Calu3 (cell line): ENCODE measurements at regions of chr7 and their contacts with region 1.

Region 1: DNA sequence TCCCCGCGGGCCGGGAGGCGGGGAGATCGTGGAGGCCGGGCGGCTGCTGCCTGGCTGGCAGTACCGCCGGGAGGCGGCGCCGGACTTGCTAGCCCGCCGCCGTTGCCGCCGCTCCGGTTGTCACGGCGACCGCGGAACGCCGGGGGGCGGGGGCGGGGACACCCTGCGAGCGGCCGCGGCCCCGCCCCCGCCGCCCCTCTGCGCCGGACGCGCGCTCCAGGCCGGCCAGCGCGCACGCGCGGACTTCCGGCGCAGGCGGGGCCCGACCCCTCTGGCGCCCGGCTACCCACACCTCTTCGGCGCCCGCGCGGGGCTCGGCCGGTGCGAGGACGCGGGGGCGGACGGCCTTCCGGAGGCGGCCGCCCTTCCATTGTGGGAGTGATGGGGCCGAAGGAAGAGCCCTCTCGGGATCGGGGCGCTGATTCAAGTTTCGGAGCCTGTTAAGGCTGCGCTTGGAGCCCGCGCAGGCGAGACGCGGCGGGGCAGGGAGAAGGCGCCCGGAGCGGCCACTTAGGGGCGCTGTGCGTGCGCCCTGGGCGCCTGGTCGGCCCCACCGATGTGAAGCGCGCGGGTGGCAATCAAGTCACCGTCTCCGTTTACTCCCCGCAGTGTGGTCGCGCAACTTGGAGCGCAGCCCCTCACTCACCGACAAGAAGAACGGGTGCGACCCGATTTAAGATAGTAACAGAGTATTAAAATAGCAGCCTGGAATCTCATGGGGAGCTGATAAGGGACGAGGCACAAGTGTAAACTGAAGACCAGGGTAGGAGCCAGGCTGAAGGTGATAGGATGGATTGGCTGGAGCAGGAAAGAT is 448 bp upstream of the DPY19L1 start:
- DNase-seq: peak; percentile 99
- H3K4me3 Mint-ChIP-seq: peak overlapping the region; percentile 73
- H3K27ac Mint-ChIP-seq: peak overlapping the region; percentile 77
- H3K4me1 Mint-ChIP-seq: peaks cover 38% of the 10 kb centered on the region
- H3K27me3 Mint-ChIP-seq: peaks cover 4% of the 10 kb centered on the region
- CTCF ChIP-seq: peak; percentile 90

Region 2: GRCh38 chr7:34321000-34321581 is 716.6 kb before region 1 on chr7:
- CTCF ChIA-PET with region 1: interaction called, 22 read pairs
- intact Hi-C with region 1: no loop called
- DNase-seq: peak; percentile 83
- H3K4me3 Mint-ChIP-seq: peak overlapping the region; percentile 56
- H3K27ac Mint-ChIP-seq: peak overlapping the region; percentile 40
- H3K4me1 Mint-ChIP-seq: peaks cover 15% of the 10 kb centered on the region
- H3K27me3 Mint-ChIP-seq: no peaks in the 10 kb centered on the region
- CTCF ChIP-seq: peak; percentile 97

Region 3: DNA sequence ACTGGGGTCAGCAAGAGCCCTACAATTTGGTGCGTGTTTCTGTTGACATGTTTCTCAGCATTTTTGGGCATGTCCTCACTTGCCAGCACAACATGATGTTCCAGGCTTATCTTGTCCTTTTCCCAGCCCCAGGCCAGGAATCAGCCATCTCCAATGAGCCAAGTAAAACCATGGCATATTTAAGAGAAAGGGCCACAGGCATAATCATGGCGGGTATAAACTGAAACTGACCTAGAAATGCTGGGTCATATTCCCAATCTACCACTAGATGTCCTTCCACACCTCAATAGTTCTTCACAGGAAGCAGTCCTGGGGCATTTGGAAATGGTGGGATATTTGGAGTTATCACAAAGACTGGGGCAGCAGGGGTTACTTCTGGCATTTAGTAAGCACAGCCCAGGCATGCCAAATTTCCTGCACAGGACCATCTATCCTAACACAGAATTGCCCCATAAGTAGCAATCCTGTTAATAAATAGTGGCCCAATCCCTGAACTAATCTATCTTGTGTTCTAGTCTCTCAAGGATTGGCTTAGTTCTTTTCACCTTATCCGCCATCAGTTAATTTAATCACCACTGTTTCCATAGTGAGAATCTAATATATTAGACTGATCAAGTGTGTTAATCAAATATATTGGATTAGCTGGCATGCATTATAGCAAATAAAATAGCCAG is 278.1 kb before region 1 on chr7:
- CTCF ChIA-PET with region 1: interaction called, 3 read pairs
- intact Hi-C with region 1: loop called (anchors 2 kb)
- DNase-seq: peak; percentile 53
- H3K4me3 Mint-ChIP-seq: no peak overlapping the region
- H3K27ac Mint-ChIP-seq: no peak overlapping the region
- H3K4me1 Mint-ChIP-seq: peaks cover 40% of the 10 kb centered on the region
- H3K27me3 Mint-ChIP-seq: no peaks in the 10 kb centered on the region
- CTCF ChIP-seq: peak; percentile 82

Region 4: DNA sequence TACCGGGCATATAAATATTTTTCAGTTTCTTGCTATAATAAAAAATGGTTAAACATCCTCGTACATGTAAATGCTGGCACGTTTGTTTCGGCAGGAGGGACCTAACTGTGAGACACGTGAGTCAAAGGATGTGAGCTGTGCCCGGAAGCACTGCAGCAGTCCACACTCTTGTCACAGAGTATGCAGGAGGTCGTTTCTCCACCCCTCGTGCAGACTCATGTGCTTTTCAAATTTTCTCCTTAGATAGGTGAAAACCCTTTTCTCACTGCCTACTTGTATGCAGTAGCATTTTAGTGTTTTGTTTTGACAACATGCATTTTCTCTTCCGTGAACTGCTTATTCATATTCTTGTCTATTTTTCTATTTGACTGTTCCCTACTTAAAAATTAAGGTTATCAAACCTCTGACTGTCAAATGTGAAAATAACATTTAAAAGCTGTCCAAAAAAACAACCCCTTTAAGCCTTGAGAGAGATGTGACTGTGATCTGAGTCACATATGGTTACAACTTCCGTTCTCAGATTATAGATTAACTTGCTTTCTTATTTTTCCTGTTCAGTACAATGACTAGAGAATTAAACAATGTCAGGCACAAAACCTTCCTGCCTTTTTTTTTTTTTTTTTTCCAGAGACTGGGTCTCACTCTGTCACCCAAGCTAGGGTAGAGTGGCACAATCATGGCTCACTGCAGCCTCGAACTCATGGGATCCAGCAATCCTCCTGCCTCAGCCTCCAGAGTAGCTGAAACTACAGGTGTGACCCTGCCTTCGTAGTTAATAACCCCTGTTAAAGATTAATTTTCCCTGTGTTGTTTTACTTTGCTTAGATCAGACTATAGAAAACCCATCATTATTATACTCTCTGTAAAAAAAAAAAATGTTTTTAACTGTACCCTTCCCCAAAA is 45.5 kb before region 1 on chr7:
- CTCF ChIA-PET with region 1: interaction called, 10 read pairs
- intact Hi-C with region 1: loop called (anchors 2 kb)
- DNase-seq: peak; percentile 64
- H3K4me3 Mint-ChIP-seq: peak overlapping the region; percentile 59
- H3K27ac Mint-ChIP-seq: peak overlapping the region; percentile 95
- H3K4me1 Mint-ChIP-seq: peaks cover 51% of the 10 kb centered on the region
- H3K27me3 Mint-ChIP-seq: no peaks in the 10 kb centered on the region
- CTCF ChIP-seq: no peak

Region 5: GRCh38 chr7:35519971-35520809 is 482.5 kb after region 1 on chr7:
- CTCF ChIA-PET with region 1: no interaction called
- intact Hi-C with region 1: loop called (anchors 1 kb)
- DNase-seq: peak; percentile 86
- H3K4me3 Mint-ChIP-seq: no peak overlapping the region
- H3K27ac Mint-ChIP-seq: no peak overlapping the region
- H3K4me1 Mint-ChIP-seq: no peaks in the 10 kb centered on the region
- H3K27me3 Mint-ChIP-seq: peaks cover 87% of the 10 kb centered on the region
- CTCF ChIP-seq: peak; percentile 98